Upper lobe of right lung (tissue), 1 donor: ENCODE measurements at regions of chr10 and their contacts with region 1.

Region 1: DNA sequence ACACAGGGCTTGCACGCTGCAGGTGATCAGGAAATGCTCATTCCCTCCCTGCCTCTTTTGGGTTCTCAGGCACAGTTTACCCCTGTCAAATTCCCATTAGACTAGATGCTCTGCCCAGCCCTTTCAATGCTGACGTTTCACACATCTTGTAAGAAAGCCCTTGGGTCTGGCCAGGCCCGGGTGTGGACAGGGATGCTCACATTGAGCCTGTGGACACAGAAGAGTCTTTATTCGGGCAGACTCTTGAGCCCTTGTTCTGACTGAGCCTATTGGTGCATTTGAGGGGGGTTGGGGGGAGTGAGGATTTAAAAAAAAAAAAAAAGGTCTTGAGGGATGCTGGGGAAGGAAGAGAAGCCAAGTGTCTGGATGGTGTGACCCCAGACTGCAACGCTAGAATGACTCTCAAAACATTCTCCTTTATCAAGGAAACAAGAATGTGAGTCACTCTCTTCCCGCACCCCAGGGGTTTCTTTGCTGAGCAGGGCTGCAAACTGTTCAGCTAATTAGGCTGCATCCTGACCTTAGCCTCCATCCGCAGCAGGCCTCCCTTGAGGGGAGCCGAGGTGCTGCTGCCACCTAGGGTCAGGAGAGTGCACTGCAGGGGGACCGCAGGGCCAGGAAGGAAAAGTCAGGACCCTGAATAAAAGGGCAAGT is 53.6 kb upstream of the TMEM72 start:
- DNase-seq: peak; percentile 77
- ATAC-seq: peak; percentile 85
- H3K4me3 ChIP-seq: no peak overlapping the region
- H3K27ac ChIP-seq: no peak overlapping the region
- H3K4me1 ChIP-seq: no peaks in the 10 kb centered on the region
- H3K27me3 ChIP-seq: no peaks in the 10 kb centered on the region
- CTCF ChIP-seq: peak; percentile 99

Region 2: DNA sequence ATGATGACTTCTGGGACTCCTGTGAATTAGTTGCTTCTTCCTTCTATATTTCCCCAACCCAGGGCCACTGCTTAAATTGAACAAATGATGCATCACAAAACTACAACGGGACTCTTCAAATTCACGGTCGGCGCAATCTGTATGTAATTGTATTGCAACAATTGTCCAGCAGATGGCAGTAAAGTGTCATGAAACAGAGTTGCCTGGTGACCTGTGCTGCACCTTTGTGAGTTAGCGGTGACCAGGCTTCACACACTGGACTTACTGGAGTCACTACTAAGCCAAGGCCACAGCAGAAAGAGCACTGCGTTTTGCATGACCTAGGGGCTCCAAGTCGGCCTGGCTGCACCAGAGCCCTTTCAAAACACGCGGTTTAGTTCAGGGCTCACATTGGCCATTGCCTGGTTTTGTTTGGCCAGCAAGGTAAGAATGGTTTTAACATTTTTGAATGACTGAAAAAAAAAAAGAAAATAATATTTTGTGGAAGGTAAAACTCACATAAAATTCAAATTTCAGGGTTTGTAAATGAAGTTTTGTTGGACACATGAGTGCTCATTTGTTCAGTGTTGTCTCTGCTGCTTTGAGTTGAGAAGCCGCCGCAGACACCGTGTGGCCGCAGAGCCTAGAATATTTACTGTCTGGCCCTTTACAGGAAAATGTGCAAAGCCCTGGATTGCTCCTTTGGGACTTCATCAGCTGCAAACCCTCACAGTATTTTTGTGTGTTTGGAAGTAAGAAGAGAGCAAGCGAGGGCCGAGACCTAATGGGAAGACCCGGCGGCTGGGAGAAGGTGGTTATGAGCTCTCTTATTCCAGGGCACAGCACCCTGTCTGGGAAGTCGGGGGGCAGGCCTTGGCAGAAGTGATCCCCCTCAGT is 1185.6 kb before region 1 on chr10:
- intact Hi-C with region 1: loop called (anchors 5 kb)
- DNase-seq: peak; percentile 59
- ATAC-seq: peak; percentile 86
- H3K4me3 ChIP-seq: no peak overlapping the region
- H3K27ac ChIP-seq: no peak overlapping the region
- H3K4me1 ChIP-seq: no peaks in the 10 kb centered on the region
- H3K27me3 ChIP-seq: peaks cover 17% of the 10 kb centered on the region
- CTCF ChIP-seq: peak; percentile 77